ENCODE measurements at regions of chr14 and their contacts with region 1.

Region 1: GRCh38 chr14:94036313-94037050 is 10.3 kb downstream of the OTUB2 start:
- DNase-seq: peak; percentile 69
- H3K4me3 Mint-ChIP-seq: no peak overlapping the region
- H3K27ac Mint-ChIP-seq: no peak overlapping the region
- H3K4me1 Mint-ChIP-seq: peaks cover 3% of the 10 kb centered on the region
- H3K27me3 Mint-ChIP-seq: no peaks in the 10 kb centered on the region

Region 2: DNA sequence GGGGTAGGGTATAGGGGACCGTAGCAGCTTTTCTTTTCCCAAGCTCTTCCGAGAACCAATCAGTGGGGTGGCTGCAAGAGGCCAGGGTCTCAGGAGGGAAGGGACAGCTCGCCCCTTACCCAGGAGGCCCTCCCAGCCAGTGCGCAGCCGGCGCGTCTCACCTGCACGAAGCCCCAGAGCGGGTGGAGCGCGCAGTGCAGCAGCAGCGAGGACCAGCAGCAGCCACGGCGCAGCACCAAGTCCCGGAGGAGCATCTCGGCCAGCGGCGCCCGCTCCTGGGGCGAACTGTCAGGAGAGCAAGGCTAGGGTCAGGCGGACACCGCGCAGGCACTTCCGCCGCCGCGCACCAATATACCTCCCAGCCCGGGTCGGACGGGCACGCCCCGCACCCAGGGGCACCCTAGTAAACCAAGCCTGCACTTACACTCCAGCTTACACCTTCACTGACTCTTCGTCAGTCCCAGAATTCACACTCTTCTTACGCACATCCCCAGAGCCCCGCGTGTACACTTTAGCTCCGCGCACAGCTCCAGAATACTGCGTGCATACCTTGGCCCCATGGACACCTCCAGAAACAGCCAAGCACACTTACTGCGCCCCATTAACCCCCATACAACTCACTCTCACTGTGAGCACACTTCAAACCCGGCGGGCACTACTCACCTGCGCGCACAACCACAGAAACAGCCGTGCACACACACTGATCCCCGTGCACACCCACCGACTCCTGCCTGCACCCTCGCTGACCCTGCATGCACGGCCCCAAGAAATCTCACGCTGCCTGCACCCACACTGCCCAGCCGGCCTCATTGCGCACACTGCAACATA is 248.8 kb before region 1 on chr14:
- intact Hi-C with region 1: no loop called
- DNase-seq: no peak
- H3K4me3 Mint-ChIP-seq: no peak overlapping the region
- H3K27ac Mint-ChIP-seq: no peak overlapping the region
- H3K4me1 Mint-ChIP-seq: no peaks in the 10 kb centered on the region
- H3K27me3 Mint-ChIP-seq: peaks cover 70% of the 10 kb centered on the region

Region 3: DNA sequence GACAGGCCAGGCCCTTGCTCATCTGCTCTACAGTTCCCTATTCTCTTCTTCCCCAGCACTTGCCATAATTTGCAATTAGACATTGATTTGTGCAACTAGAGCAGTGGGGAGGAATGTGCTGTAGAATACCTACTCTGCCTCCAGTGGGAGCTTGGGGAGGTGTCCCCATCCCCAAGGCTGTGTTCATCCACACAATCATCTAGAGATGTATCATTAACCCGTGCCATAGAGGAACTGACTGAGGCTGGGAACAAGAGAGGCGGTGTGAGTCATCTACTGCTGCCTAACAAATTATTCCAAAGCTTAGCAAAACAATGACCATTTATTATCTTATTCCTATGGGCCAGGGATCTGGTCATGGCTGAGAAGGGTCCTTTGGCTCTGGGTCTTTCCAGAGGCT is 15.5 kb before region 1 on chr14:
- intact Hi-C with region 1: loop called (anchors 1 kb)
- DNase-seq: no peak
- H3K4me3 Mint-ChIP-seq: no peak overlapping the region
- H3K27ac Mint-ChIP-seq: peak overlapping the region; percentile 81
- H3K4me1 Mint-ChIP-seq: peaks cover 36% of the 10 kb centered on the region
- H3K27me3 Mint-ChIP-seq: peaks cover 8% of the 10 kb centered on the region

Region 4: GRCh38 chr14:94136575-94137331 is 100.3 kb after region 1 on chr14:
- intact Hi-C with region 1: loop called (anchors 1 kb)
- DNase-seq: peak; percentile 75
- H3K4me3 Mint-ChIP-seq: no peak overlapping the region
- H3K27ac Mint-ChIP-seq: no peak overlapping the region
- H3K4me1 Mint-ChIP-seq: peaks cover 6% of the 10 kb centered on the region
- H3K27me3 Mint-ChIP-seq: peaks cover 31% of the 10 kb centered on the region

Region 5: DNA sequence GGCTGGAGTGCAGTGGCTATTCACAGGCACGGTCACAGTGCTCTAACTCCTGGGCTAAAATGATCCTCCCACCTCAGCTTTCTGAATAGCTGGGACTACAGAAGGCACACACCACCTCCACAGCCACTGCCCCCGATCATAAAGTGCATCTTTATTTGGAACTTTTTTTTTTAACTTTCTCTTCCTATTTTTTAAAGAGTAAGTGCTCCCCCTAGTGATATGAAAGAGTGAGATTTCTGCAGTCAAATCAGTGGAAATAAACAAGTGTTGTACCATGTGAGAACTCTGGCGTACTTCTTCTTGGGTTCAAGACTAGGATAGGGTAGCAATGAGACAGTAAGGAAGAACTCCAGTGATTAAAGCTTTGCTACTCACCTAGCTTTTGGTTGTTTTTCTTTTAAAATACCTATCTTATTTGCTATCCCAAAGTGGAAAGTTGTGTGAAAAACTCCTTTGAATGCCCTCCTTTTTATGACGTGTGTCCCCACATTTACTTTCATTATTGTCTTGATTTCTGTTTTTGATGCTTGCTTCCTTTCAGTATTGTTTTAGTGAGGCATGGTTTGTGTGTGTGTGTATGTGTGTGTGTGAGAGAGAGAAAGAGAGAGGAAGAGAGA is 144.3 kb after region 1 on chr14:
- intact Hi-C with region 1: loop called (anchors 1 kb)
- DNase-seq: no peak
- H3K4me3 Mint-ChIP-seq: peak overlapping the region; percentile 40
- H3K27ac Mint-ChIP-seq: peak overlapping the region; percentile 9
- H3K4me1 Mint-ChIP-seq: peaks cover 14% of the 10 kb centered on the region
- H3K27me3 Mint-ChIP-seq: peaks cover 28% of the 10 kb centered on the region